Activated naive CD4-positive, alpha-beta T cell treated with anti-CD3 and anti-CD28 coated beads for 36 hours (primary cell): ENCODE measurements at regions of chr20 and their contacts with region 1.

Region 1: GRCh38 chr20:2387180-2387577 is 6.5 kb downstream of the TGM6 start:
- DNase-seq: peak; percentile 74
- H3K4me3 Mint-ChIP-seq: no peak overlapping the region
- H3K27ac Mint-ChIP-seq: no peak overlapping the region
- H3K4me1 Mint-ChIP-seq: peaks cover 4% of the 10 kb centered on the region
- H3K27me3 Mint-ChIP-seq: no peaks in the 10 kb centered on the region

Region 2: GRCh38 chr20:2276015-2276414 is 111.2 kb before region 1 on chr20:
- CTCF ChIA-PET with region 1: no interaction called
- intact Hi-C with region 1: no loop called
- DNase-seq: no peak
- H3K4me3 Mint-ChIP-seq: no peak overlapping the region
- H3K27ac Mint-ChIP-seq: no peak overlapping the region
- H3K4me1 Mint-ChIP-seq: no peaks in the 10 kb centered on the region
- H3K27me3 Mint-ChIP-seq: peaks cover 4% of the 10 kb centered on the region

Region 3: GRCh38 chr20:2446845-2447244 is 59.7 kb after region 1 on chr20:
- CTCF ChIA-PET with region 1: interaction called, 28 read pairs
- intact Hi-C with region 1: loop called (anchors 1 kb)
- DNase-seq: no peak
- H3K4me3 Mint-ChIP-seq: no peak overlapping the region
- H3K27ac Mint-ChIP-seq: no peak overlapping the region
- H3K4me1 Mint-ChIP-seq: peaks cover 15% of the 10 kb centered on the region
- H3K27me3 Mint-ChIP-seq: no peaks in the 10 kb centered on the region